Right lobe of liver (tissue), 6 donors: ENCODE measurements at regions of chr2 and their contacts with region 1.

Region 1: GRCh38 chr2:163132850-163133249 is 294.3 kb upstream of the KCNH7 start:
- DNase-seq: no peak
- ATAC-seq: peak in 2 of 4 donors; percentile 40 to 53
- H3K4me3 ChIP-seq: no peak overlapping the region
- H3K27ac ChIP-seq: no peak overlapping the region
- H3K4me1 ChIP-seq: no peaks in the 10 kb centered on the region
- H3K27me3 ChIP-seq: no peaks in the 10 kb centered on the region
- CTCF ChIP-seq: peak; percentile 44 to 49 (median 46)
- POLR2A ChIP-seq: no peak

Region 2: DNA sequence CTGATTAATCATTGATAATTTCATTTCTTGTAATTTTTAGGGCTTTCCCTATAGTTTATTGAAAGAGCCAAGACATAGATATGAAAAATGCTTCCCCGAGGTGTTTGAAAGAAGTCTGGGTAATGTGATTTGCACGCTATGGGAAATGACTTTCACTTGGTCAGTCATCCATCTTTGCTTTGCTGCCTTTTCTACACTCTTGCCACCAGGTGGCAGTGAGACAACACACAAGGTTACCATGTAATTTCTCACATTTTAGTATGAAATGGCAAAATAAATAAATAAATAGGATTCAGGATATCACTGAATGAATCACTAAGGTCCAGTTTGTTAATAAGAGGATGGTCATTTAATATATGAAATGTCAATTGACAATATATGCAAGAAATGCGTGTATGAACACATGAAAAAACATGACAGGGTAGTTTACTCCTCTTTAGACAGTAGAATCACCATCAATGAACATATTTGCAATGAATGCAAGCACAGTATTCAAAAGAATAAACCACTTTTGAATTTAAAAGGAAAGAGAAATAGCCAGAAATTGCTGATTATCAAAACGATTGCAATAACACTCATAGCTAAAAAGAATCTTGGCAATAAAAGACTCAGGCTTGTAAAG is 242.0 kb before region 1 on chr2:
- intact Hi-C with region 1: loop called in 1 of 2 experiments (anchors 10 kb)
- DNase-seq: no peak
- ATAC-seq: peak; percentile 84 to 92 (median 85)
- H3K4me3 ChIP-seq: no peak overlapping the region
- H3K27ac ChIP-seq: no peak overlapping the region
- H3K4me1 ChIP-seq: no peaks in the 10 kb centered on the region
- H3K27me3 ChIP-seq: no peaks in the 10 kb centered on the region
- CTCF ChIP-seq: peak; percentile 59 to 83 (median 77)
- POLR2A ChIP-seq: no peak

Region 3: GRCh38 chr2:162908567-162908966 is 224.3 kb before region 1 on chr2:
- intact Hi-C with region 1: loop called in 1 of 2 experiments (anchors 10 kb)
- DNase-seq: no peak
- ATAC-seq: no peak
- H3K4me3 ChIP-seq: no peak overlapping the region
- H3K27ac ChIP-seq: no peak overlapping the region
- H3K4me1 ChIP-seq: no peaks in the 10 kb centered on the region
- H3K27me3 ChIP-seq: no peaks in the 10 kb centered on the region
- CTCF ChIP-seq: no peak
- POLR2A ChIP-seq: no peak

Region 4: DNA sequence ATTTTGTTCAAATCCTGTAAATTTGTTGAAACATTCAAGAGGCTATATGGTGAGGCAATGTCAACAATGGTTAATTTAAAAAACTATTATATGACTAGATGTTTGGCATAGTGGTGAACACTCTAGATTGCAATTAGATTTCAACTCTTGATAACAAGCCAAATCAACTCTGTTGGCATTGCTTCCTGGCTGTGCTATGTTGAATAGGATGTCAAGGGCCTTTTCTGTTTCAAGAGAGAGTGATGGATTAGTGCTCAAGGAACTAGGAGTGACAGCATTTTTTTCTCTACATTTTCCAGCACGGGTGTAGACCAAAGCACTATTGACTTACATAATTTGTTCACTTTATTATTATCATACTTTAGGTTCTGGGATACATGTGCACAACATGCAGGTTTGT is 121.8 kb before region 1 on chr2:
- intact Hi-C with region 1: no loop called
- DNase-seq: no peak
- ATAC-seq: no peak
- H3K4me3 ChIP-seq: no peak overlapping the region
- H3K27ac ChIP-seq: no peak overlapping the region
- H3K4me1 ChIP-seq: no peaks in the 10 kb centered on the region
- H3K27me3 ChIP-seq: no peaks in the 10 kb centered on the region
- CTCF ChIP-seq: no peak
- POLR2A ChIP-seq: no peak